Natural killer cell (primary cell): ENCODE measurements at regions of chr10 and their contacts with region 1.

Region 1: DNA sequence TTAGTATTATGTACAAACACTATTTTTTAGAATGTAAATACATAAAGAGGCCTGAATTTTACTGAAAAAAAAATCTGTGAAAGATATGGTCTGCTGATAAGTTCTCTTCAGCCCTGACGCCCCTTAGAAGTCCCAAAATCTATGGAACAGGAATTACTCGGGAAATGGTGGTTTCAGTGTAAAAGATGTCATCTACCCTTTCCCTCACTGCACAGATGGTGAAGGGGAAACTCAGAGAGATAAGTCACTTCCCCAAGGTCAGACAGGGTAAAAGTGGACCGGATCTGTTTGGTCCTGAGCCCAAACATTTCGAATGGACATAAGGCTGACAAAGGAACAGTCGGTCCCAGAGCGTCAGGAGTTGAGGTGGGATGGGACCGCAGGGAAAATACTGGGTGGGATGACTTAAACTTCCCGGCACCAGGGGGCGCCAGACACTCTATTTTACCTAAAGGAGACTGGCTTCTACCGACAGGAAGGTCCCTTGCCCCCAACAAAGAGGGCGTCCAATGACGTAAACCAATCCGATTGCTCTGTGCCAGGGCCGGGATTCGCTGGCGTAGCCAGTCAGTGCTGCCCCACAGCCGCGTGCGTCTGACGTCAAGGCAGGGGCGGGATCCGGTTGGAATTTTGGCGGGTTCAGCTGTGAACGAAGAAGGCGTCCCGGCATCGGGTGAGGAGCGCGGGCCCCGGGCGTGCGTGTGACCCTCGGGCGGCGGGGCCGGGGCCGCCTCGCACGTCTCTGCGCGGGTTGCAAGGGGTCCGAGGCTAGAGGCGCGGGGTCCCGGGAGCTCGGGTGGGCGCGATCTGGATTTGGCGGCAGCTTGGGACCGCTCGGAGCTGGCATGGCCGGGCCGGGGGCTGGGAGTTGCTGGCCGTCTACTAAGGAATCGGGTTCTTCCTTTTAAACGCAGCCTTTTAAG is at the start of gene MCM10:
- DNase-seq: peak; percentile 95 to 99
- ATAC-seq: peak; percentile 99 to 100 (median 99)
- H3K4me3 ChIP-seq: peak within 1 kb of the TSS; percentile 35
- H3K4me3 Mint-ChIP-seq: peak within 1 kb of the TSS; percentile 95
- H3K27ac ChIP-seq: no peak within 1 kb of the TSS
- H3K27ac Mint-ChIP-seq: peak within 1 kb of the TSS; percentile 87 to 93
- H3K4me1 ChIP-seq: peaks cover 9% of the 10 kb centered on the region
- H3K4me1 Mint-ChIP-seq: peaks cover 21 to 27% of the 10 kb centered on the region in 2 donors
- H3K27me3 ChIP-seq: no peaks in the 10 kb centered on the region
- H3K27me3 Mint-ChIP-seq: no peaks in the 10 kb centered on the region
- CTCF ChIP-seq: peak; percentile 98
- total RNA-seq, gene MCM10: 0.73 to 2.9 (median 1.3) TPM

Region 2: GRCh38 chr10:13348216-13349017 is 187.2 kb after region 1 on chr10 and contains the start of gene SEPHS1:
- intact Hi-C with region 1: loop called (anchors 5 kb)
- DNase-seq: peak; percentile 58 to 89
- ATAC-seq: peak; percentile 60 to 71 (median 68)
- H3K4me3 ChIP-seq: peak within 1 kb of the TSS; percentile 83
- H3K4me3 Mint-ChIP-seq: peak within 1 kb of the TSS; percentile 93
- H3K27ac ChIP-seq: peak within 1 kb of the TSS; percentile 77
- H3K27ac Mint-ChIP-seq: peak within 1 kb of the TSS; percentile 56 to 67
- H3K4me1 ChIP-seq: peaks cover 37% of the 10 kb centered on the region
- H3K4me1 Mint-ChIP-seq: peaks cover 19 to 25% of the 10 kb centered on the region in 2 donors
- H3K27me3 ChIP-seq: no peaks in the 10 kb centered on the region
- H3K27me3 Mint-ChIP-seq: peaks cover 18 to 22% of the 10 kb centered on the region in 2 donors
- CTCF ChIP-seq: no peak
- total RNA-seq, gene SEPHS1: 20.4 to 28.2 (median 23.4) TPM